Activated CD4-positive, alpha-beta memory T cell treated with anti-CD3 and anti-CD28 coated beads for 36 hours (primary cell): ENCODE measurements at regions of chr15 and their contacts with region 1.

Region 1: GRCh38 chr15:60044636-60045270 is 40.6 kb downstream of the FOXB1 start:
- DNase-seq: peak; percentile 57
- H3K4me3 Mint-ChIP-seq: peak overlapping the region; percentile 46
- H3K27ac Mint-ChIP-seq: peak overlapping the region; percentile 75
- H3K4me1 Mint-ChIP-seq: peaks cover 19% of the 10 kb centered on the region
- H3K27me3 Mint-ChIP-seq: peaks cover 4% of the 10 kb centered on the region

Region 2: GRCh38 chr15:59966262-59966661 is 78.5 kb before region 1 on chr15:
- CTCF ChIA-PET with region 1: no interaction called
- POLR2A ChIA-PET with region 1: no interaction called
- intact Hi-C with region 1: no loop called
- DNase-seq: no peak
- H3K4me3 Mint-ChIP-seq: no peak overlapping the region
- H3K27ac Mint-ChIP-seq: no peak overlapping the region
- H3K4me1 Mint-ChIP-seq: peaks cover 11% of the 10 kb centered on the region
- H3K27me3 Mint-ChIP-seq: peaks cover 8% of the 10 kb centered on the region

Region 3: DNA sequence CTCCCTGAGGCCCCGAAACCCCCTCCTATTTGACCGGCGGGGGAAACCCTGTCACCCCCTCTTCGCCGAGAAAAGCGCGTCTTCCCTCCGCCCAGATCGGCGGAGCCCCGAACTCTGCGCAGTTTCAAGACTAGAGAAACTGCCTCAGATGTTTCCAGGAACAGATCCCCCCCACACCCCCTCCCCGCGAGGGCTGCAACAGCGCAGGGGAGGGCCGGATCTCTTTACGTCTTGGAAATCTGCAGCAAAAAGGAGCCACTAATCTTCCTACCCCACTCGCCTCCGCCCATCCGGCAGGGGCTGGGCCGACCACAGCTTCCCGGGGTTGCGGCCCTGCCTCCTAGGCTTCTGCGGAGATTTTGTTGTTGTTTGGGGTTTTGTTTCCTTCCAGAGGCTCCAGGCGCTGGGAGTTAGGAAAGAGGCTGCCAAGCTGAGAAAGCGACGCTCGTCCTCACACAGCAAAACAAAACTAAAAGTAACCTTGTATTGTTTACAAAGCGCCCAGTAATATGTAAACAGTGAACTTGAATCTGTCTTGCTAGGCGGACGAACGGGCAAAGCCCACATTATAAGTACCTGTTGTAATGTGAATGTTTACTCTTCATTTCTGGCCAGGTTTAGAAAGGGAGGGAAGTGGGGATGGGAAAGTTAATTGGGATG is 38.4 kb before region 1 on chr15:
- CTCF ChIA-PET with region 1: interaction called, 3 read pairs
- POLR2A ChIA-PET with region 1: interaction called, 3 read pairs
- intact Hi-C with region 1: loop called (anchors 5 kb)
- DNase-seq: peak; percentile 87
- H3K4me3 Mint-ChIP-seq: peak overlapping the region; percentile 84
- H3K27ac Mint-ChIP-seq: peak overlapping the region; percentile 77
- H3K4me1 Mint-ChIP-seq: peaks cover 45% of the 10 kb centered on the region
- H3K27me3 Mint-ChIP-seq: peaks cover 85% of the 10 kb centered on the region

Region 4: DNA sequence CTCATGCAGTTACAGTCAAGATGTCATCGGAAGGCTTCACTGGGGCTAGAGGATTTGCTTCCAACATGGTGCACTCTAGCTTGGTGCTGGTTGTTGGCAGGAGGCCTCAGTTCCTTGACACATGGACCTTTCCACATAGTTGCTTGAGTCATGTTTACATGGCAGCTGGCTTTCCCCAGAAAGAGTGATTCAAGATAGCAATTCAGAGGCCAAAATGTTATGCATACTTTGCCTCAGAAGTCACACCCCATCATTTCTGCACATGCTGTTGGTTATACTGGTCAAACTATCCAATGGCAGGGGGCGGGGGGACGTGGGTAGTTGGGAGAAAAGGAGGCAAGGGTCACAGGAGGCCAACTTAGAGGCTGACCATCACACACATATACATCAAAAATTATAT is 18.1 kb after region 1 on chr15:
- CTCF ChIA-PET with region 1: no interaction called
- POLR2A ChIA-PET with region 1: no interaction called
- intact Hi-C with region 1: no loop called
- DNase-seq: no peak
- H3K4me3 Mint-ChIP-seq: no peak overlapping the region
- H3K27ac Mint-ChIP-seq: no peak overlapping the region
- H3K4me1 Mint-ChIP-seq: no peaks in the 10 kb centered on the region
- H3K27me3 Mint-ChIP-seq: peaks cover 22% of the 10 kb centered on the region